ENCODE measurements at regions of chr6 and their contacts with region 1.

Region 1: GRCh38 chr6:12538881-12539357 is 177.6 kb upstream of the PHACTR1 start:
- DNase-seq: peak; percentile 89
- H3K4me3 ChIP-seq: no peak overlapping the region
- H3K27ac ChIP-seq: peak overlapping the region; percentile 87
- H3K4me1 ChIP-seq: peaks cover 51% of the 10 kb centered on the region
- H3K27me3 ChIP-seq: no peaks in the 10 kb centered on the region
- CTCF ChIP-seq: no peak
- POLR2A ChIP-seq: peak; percentile 38

Region 2: GRCh38 chr6:12011276-12012076 is 527.4 kb before region 1 on chr6:
- CTCF ChIA-PET with region 1: no interaction called
- POLR2A ChIA-PET with region 1: no interaction called
- dilution Hi-C with region 1: no loop called
- intact Hi-C with region 1: loop called (anchors 5 kb)
- DNase-seq: peak; percentile 96
- H3K4me3 ChIP-seq: peak overlapping the region in 1 of 3 experiments; percentile 71
- H3K27ac ChIP-seq: peak overlapping the region; percentile 98
- H3K4me1 ChIP-seq: peaks cover 38% of the 10 kb centered on the region
- H3K27me3 ChIP-seq: no peaks in the 10 kb centered on the region
- CTCF ChIP-seq: no peak
- POLR2A ChIP-seq: peak; percentile 7

Region 3: DNA sequence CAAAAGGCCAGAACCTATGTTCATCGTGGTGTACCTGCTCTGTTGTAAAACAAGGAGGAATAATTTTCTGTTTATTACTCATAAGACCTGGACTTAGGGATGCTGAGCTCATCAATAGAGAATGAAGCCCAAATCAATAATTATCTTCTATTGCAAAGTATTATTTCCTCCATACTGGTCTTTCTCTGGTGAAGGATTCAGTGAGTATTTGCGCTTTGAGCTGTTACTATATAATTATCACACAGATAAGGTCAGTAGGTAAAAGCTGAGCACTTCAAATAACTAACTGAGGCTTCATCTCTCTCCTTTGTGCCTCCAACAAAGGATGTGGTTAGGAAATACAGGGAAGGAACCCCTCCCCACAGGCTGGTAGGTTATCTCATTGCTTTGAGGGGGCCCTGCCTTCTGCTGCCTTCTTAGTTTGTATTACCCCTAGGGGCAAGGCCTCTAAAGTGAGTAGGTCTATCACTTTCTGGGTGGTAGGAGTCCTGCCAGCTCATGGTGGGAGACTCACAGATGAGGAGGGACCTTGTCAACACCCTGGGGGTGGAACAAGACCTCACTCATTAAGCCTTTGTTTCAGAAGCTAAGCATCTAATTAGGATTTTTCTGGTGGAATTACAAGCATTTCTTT is 214.3 kb before region 1 on chr6:
- CTCF ChIA-PET with region 1: no interaction called
- POLR2A ChIA-PET with region 1: no interaction called
- dilution Hi-C with region 1: no loop called
- intact Hi-C with region 1: loop called (anchors 1 kb)
- DNase-seq: no peak
- H3K4me3 ChIP-seq: no peak overlapping the region
- H3K27ac ChIP-seq: peak overlapping the region; percentile 60
- H3K4me1 ChIP-seq: peaks cover 17% of the 10 kb centered on the region
- H3K27me3 ChIP-seq: no peaks in the 10 kb centered on the region
- CTCF ChIP-seq: no peak
- POLR2A ChIP-seq: peak; percentile 40

Region 4: DNA sequence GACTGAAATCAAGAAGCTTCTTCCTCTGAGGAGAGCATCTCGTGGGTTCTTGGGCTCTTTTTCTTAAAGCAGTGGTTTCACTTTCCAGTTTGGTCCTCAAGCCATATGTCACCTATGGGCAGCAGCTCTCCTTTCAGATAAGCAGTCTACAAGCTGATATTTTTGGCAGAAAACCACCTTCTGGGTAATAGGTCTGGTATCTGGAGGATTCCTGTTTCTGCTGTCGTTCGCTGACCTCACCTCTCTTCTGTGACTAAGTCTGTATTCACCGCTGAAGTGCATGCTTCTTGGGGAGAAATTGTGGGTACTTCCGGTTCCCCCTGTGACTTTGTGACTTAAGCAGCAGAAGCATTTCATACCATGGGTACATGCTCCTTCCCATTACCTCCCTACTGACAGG is 55.2 kb before region 1 on chr6:
- CTCF ChIA-PET with region 1: interaction called, 5 read pairs
- POLR2A ChIA-PET with region 1: no interaction called
- dilution Hi-C with region 1: no loop called
- intact Hi-C with region 1: loop called (anchors 1 kb)
- DNase-seq: peak; percentile 90
- H3K4me3 ChIP-seq: peak overlapping the region in 1 of 3 experiments; percentile 9
- H3K27ac ChIP-seq: peak overlapping the region; percentile 74
- H3K4me1 ChIP-seq: peaks cover 54% of the 10 kb centered on the region
- H3K27me3 ChIP-seq: no peaks in the 10 kb centered on the region
- CTCF ChIP-seq: no peak
- POLR2A ChIP-seq: peak; percentile 56

Region 5: DNA sequence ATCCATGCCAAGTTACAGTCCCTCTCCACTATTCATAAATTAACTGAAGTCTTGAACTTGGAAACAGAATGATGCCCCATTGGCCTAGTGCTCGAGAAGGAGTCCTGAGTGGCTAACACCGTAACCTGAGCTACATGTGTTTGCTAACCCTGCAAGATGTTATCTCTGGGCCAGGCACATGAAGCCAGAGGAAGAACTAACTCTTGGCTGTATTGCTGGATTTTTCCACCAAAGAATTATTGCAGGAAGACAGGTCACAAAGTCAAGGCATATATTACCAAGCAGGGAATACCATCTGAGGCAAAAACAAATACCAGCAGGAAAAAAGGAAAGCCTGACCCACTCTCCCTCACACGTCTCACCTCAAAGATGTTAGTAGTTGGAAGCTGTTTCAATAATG is 28.8 kb after region 1 on chr6:
- CTCF ChIA-PET with region 1: interaction called, 5 read pairs
- POLR2A ChIA-PET with region 1: no interaction called
- dilution Hi-C with region 1: no loop called
- intact Hi-C with region 1: loop called (anchors 1 kb)
- DNase-seq: peak; percentile 98
- H3K4me3 ChIP-seq: no peak overlapping the region
- H3K27ac ChIP-seq: peak overlapping the region; percentile 58
- H3K4me1 ChIP-seq: peaks cover 45% of the 10 kb centered on the region
- H3K27me3 ChIP-seq: no peaks in the 10 kb centered on the region
- CTCF ChIP-seq: no peak
- POLR2A ChIP-seq: peak; percentile 48